ENCODE measurements at regions of chr7 and their contacts with region 1.

Region 1: GRCh38 chr7:100401811-100402210 is 26.7 kb downstream of the ZCWPW1 start:
- DNase-seq: no peak
- CTCF ChIP-seq: no peak

Region 2: DNA sequence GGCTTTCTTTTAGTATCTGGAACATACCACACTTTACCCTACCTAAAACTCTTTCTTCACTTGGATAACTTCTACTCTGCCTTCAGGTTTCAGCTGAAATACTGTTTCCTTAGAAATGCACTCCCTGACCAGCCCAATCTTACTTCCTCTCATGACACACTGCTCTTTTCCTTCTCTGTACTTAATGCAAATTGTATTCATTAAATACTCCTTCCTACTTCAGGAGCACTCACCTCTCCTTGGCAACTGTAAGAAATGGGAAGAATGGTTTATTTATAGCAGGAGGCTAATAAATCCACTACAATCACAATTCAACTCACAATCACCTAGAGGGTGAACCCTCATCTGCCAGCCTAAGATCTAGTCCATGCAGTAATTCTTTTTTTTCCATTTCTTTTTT is 11.5 kb after region 1 on chr7:
- CTCF ChIA-PET with region 1: interaction called, 44 read pairs
- POLR2A ChIA-PET with region 1: no interaction called
- DNase-seq: no peak
- CTCF ChIP-seq: no peak